ENCODE measurements at regions of chr18 and their contacts with region 1.

Region 1: DNA sequence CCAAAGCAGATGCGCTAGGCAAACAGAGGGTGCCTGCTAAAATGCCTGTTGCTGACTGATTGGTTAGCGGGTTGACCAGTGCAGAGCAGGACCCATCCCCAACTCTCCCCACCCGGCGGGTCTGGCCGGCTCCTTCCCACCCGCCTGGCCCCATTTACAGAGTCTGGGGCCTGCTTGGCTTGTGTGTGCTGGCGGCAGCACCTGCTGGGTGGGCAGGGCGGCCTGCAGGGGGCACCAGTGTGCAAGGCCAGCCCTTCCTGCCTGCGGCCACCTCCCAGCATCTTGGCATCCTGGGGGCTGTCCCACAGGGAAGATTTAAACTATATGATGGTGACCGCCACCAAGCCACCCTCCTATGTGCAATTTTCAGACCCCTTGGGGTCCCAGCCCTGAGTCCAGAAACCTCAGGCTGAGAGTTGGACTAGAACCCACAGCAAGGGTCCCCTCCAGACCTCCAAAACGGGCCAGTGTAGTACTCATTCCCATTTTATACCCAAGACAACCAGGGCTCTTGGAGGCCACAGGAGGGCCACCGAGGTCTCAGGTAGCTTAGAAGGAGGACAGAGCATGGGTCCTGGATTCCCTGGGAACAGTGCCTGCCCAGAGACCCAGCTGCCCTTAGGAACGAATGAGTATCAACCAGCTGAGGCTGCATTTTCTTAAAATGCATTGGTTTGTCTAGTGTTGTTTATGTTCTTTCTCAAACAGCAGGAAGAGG is 173.6 kb downstream of the SMAD7 start:
- DNase-seq: peak; percentile 12
- H3K4me3 ChIP-seq: no peak overlapping the region
- H3K27ac ChIP-seq: no peak overlapping the region
- H3K4me1 ChIP-seq: peaks cover 1% of the 10 kb centered on the region
- H3K27me3 ChIP-seq: no peaks in the 10 kb centered on the region
- CTCF ChIP-seq: peak; percentile 70 to 73

Region 2: DNA sequence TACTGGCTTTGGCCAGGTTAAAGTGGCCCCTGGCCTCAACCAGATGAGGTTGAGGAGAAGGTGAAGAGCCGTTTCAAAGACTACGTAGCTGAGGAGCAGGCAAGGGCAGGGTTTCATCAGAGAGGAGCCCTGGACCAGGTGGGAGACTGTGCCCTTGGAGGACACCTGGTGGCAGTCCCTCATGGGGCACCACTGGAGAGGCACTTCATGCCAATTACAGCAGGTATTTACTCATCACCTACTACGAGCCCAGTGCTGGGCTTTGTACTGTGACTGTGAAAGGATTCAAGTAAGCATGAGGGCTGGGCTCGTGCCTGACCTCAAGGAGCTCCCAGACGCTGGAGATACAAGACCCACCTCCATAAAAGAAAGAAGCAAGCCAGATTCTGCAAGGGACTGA is 136.0 kb after region 1 on chr18:
- CTCF ChIA-PET with region 1: no interaction called
- dilution Hi-C with region 1: no loop called
- in situ Hi-C with region 1: no loop called
- intact Hi-C with region 1: loop called (anchors 1 kb)
- DNase-seq: no peak
- H3K4me3 ChIP-seq: no peak overlapping the region
- H3K27ac ChIP-seq: no peak overlapping the region
- H3K4me1 ChIP-seq: no peaks in the 10 kb centered on the region
- H3K27me3 ChIP-seq: no peaks in the 10 kb centered on the region
- CTCF ChIP-seq: peak; percentile 25 to 49

Region 3: DNA sequence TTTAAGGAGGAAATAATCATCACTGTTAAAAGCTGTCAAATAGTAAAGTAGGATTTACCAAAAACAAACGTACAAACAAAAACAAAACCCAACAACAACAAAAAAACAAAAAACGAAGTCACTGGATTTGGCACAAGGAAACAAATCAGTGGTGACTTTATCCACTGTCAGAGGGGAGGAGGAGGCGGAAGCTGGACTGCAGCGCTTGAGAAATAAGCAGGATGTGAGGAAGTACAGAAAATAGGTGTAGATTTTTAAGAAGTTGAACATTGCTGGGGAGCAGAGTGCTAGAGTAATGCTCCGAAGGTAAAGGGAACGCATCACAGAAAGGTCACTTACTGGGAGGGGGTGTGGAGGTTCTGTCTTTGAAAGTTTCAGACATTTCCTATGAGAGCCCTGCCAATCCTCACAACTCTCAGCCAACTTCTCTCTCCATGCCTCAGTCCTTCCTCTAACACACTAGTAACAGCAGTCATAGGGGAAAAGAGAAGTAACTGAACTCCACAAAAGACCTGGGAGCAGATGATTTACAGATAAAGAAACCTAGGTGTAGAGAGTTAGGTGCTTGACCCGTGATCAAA is 393.8 kb after region 1 on chr18:
- CTCF ChIA-PET with region 1: interaction called, 23 read pairs
- dilution Hi-C with region 1: no loop called
- in situ Hi-C with region 1: no loop called
- intact Hi-C with region 1: no loop called
- DNase-seq: no peak
- H3K4me3 ChIP-seq: no peak overlapping the region
- H3K27ac ChIP-seq: no peak overlapping the region
- H3K4me1 ChIP-seq: no peaks in the 10 kb centered on the region
- H3K27me3 ChIP-seq: no peaks in the 10 kb centered on the region
- CTCF ChIP-seq: no peak

Measured in mammary epithelial cell (primary cell).